Activated CD4-positive, alpha-beta memory T cell treated with anti-CD3 and anti-CD28 coated beads for 36 hours (primary cell): ENCODE measurements at regions of chr17 and their contacts with region 1.

Region 1: DNA sequence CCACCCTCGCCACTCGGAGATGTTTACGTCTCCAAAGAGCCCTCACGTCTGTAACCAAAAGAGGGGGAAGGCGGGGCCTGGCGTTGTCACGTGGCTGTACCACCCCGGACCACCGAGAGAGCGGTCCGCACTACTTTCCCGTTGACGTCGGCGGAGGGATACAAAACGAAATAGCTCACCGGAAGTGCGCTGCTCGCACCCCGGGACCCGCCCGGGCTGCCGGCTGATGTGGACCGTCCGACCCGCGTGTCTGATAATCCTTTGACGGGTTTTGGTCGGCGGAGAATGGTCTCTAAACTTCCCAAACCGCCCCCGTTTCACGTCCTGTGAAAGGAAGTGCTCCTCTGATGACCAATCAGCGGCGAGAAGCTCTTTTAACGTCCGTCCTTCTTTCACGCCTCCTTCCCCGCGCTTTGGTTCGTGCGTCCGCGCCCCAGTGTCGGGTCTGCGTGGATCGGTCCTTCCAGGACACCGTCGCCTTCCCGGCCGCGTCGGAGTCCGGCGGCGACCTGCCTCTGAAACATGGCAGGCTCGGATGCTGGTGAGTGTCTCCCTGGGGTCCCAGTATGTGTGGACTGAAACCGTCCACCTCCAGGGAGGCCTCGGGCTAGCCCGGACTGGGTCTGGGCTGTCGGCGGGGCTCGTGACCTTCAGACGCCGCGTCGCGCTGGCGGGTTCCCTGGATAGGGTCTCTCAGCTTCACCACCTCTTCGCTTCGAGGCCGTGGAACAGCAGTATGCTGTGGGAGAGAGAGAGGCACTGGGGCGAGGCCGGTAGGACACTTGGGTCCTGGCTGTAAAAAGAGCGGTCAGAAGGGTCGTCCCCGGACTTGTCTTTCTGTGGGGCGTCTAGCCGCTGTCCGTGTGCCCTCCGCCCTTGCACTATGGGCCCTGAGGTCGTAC is at the start of gene CEP95:
- DNase-seq: peak; percentile 96
- H3K4me3 Mint-ChIP-seq: peak within 1 kb of the TSS; percentile 97
- H3K27ac Mint-ChIP-seq: peak within 1 kb of the TSS; percentile 100
- H3K4me1 Mint-ChIP-seq: peaks cover 48% of the 10 kb centered on the region
- H3K27me3 Mint-ChIP-seq: peaks cover 2% of the 10 kb centered on the region
- total RNA-seq, gene CEP95: 29.9 to 37.8 TPM

Region 2: DNA sequence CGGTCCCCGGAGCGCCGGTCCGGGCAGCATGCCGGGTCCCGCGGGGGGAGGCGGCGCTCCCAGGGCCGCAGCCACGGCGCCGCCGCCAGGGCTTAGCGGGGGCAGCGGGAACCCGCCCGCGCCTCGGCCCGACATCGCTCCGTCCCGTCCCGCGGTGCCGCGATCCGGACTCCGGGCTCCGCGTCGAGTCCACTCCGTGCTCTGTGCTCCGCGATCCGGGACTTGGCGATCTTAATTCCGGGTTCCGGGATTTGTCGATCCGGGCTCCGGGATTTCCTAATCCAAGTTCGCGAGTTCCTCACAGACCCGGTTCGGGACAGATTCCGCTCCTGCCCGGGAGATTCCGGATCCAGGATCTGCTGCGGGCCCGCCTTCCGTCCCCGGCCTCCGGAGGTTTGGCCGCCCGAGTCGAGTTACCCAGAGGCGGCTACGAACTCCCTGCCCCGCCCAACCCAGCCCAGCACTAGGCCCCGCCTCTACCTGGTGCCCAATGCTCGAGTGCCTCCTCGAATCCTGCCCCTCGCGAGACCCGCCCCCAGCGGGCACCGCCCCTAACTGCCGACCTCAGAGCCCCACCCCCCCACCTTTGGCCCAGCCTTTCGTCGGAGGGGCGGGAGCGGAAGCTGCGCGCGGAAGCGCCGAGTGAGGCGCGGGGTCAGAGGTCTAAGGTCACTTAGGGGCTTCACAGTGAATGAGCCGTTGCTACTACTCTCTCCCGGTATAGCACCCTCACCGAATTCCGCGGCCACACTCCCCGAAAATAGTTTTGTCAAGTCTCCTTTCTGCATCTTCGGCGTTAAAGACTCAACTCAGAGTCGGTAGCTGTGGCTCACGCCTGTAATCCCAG is 664.1 kb before region 1 on chr17 and contains the start of gene SMARCD2:
- CTCF ChIA-PET with region 1: no interaction called
- POLR2A ChIA-PET with region 1: no interaction called
- intact Hi-C with region 1: loop called (anchors 5 kb)
- DNase-seq: peak; percentile 100
- H3K4me3 Mint-ChIP-seq: peak within 1 kb of the TSS; percentile 95
- H3K27ac Mint-ChIP-seq: peak within 1 kb of the TSS; percentile 95
- H3K4me1 Mint-ChIP-seq: peaks cover 34% of the 10 kb centered on the region
- H3K27me3 Mint-ChIP-seq: no peaks in the 10 kb centered on the region
- total RNA-seq, gene SMARCD2: 109 to 111 TPM

Region 3: GRCh38 chr17:64155751-64156544 is 350.9 kb before region 1 on chr17:
- CTCF ChIA-PET with region 1: no interaction called
- POLR2A ChIA-PET with region 1: no interaction called
- intact Hi-C with region 1: no loop called
- DNase-seq: no peak
- H3K4me3 Mint-ChIP-seq: no peak overlapping the region
- H3K27ac Mint-ChIP-seq: no peak overlapping the region
- H3K4me1 Mint-ChIP-seq: peaks cover 3% of the 10 kb centered on the region
- H3K27me3 Mint-ChIP-seq: no peaks in the 10 kb centered on the region

Region 4: GRCh38 chr17:64420143-64420971 is 86.5 kb before region 1 on chr17:
- CTCF ChIA-PET with region 1: interaction called, 21 read pairs
- POLR2A ChIA-PET with region 1: no interaction called
- intact Hi-C with region 1: no loop called
- DNase-seq: no peak
- H3K4me3 Mint-ChIP-seq: no peak overlapping the region
- H3K27ac Mint-ChIP-seq: no peak overlapping the region
- H3K4me1 Mint-ChIP-seq: no peaks in the 10 kb centered on the region
- H3K27me3 Mint-ChIP-seq: no peaks in the 10 kb centered on the region

Region 5: GRCh38 chr17:64459284-64459747 is 47.5 kb before region 1 on chr17:
- CTCF ChIA-PET with region 1: no interaction called
- POLR2A ChIA-PET with region 1: no interaction called
- intact Hi-C with region 1: no loop called
- DNase-seq: peak; percentile 10
- H3K4me3 Mint-ChIP-seq: no peak overlapping the region
- H3K27ac Mint-ChIP-seq: no peak overlapping the region
- H3K4me1 Mint-ChIP-seq: peaks cover 8% of the 10 kb centered on the region
- H3K27me3 Mint-ChIP-seq: no peaks in the 10 kb centered on the region

Region 6: GRCh38 chr17:64580384-64581315 is 73.8 kb after region 1 on chr17:
- CTCF ChIA-PET with region 1: no interaction called
- POLR2A ChIA-PET with region 1: interaction called, 5 read pairs
- intact Hi-C with region 1: loop called (anchors 2 kb)
- DNase-seq: peak; percentile 19
- H3K4me3 Mint-ChIP-seq: peak overlapping the region; percentile 31
- H3K27ac Mint-ChIP-seq: peak overlapping the region; percentile 86
- H3K4me1 Mint-ChIP-seq: peaks cover 21% of the 10 kb centered on the region
- H3K27me3 Mint-ChIP-seq: no peaks in the 10 kb centered on the region

Region 7: DNA sequence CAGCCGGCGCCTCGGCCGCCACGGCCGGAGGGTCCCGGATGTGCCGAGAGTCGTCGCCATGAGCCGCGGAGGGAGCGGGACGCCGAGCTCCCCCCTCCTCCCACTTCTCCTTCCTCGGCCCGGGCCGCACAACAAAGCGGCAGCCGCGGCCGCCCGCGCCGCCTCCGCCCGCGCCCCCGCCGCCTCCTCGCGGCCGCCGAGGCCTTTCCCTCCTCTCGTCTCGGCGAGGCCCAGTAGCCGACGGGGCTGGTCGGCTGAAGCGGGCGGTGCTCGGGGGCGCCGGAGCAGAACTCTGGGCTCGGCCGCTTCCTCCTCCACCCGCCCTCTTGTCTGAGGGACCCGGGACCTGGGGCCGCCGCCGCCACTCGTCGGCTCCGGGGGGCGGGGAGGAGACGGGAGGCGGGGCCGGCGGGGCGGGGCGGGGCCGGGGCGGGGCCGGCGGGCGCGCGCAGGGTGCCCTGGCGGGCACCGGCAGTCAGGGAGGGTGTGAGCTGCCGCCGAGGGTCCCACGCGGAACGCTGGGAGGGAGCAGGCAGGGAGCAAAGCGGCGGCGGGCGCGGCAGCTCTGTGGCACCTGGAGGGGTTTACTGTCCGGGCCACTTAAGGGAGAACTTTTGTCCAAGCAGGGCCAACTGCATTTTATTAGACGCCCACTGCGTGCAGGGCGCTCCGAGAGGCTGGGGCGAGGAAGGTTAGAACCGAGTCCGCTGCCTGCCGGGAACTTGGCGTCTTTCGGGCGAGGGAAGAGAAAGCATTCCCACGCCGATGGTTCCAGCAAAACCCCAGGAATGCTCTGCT is 155.3 kb after region 1 on chr17 and contains the start of gene SMURF2:
- CTCF ChIA-PET with region 1: no interaction called
- POLR2A ChIA-PET with region 1: interaction called, 6 read pairs
- intact Hi-C with region 1: loop called (anchors 1 kb)
- DNase-seq: peak; percentile 84
- H3K4me3 Mint-ChIP-seq: peak within 1 kb of the TSS; percentile 95
- H3K27ac Mint-ChIP-seq: peak within 1 kb of the TSS; percentile 90
- H3K4me1 Mint-ChIP-seq: peaks cover 29% of the 10 kb centered on the region
- H3K27me3 Mint-ChIP-seq: no peaks in the 10 kb centered on the region
- total RNA-seq, gene SMURF2: 11.5 to 12.1 TPM